BJ (cell line): ENCODE measurements at regions of chr6 and their contacts with region 1.

Region 1: DNA sequence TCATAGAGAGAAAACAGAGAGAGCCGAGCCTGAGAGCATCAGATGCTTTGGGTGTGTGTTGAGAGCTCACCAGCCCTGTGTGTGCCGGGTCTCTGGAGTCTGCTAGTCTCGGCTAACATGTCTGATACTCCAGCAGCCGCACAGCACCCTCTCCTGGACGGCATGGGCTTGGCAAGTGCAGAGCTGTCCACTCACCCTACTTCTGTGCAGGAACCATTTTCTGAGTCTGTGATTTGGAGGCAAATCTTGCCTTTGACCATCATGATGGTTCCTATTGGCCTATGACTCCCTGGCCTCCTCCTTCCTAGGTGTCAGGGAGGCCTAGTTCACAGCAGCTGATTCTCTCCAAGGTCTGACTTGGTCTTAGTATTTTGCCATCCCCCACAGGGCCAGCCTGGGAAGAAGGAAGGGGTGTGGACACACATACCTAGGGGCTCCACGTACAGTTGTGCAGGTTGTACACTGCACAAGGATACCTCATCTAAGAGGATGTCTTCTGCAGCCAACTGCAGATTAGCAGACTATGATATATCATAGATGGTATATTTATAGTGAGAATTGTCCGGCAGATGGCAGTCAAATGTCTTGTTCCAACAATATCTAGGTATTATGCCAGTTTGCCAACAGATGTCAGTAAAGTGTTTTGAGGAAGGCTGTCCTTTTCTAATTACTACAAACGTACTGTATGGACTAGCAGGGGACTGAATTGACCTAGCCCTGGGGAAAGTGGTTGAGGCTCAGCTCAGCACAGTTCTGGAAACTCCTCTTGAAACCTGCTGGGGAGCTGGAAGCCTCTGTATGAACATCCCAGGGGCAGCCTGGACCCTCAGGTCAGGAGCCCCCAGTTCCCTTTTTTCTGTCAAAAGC is 13.0 kb downstream of the FGD2 start:
- DNase-seq: peak; percentile 41
- H3K4me3 ChIP-seq: no peak overlapping the region
- H3K27me3 ChIP-seq: no peaks in the 10 kb centered on the region
- CTCF ChIP-seq: peak; percentile 97

Region 2: DNA sequence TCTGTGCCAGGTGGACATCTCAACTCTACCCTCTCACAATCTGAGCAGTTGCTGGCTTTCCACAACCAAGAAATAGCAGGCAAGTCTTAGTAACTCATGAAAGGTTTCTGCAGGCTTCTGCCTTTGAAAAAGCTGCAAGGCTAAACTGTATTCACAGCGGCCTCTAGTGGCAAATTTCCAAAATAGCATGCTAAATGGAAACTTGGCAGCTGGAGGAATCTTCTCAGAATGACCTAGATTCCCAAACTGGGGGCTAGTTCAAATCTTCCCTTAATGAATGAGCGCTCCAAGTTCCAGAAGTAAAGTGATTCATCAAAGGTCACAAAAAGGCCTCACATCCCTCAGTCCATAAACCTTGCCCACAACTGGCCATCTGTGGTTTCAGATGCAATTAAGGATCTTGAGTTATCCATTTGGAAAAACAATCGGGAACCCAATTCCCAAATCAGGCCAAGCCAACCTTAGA is 167.2 kb before region 1 on chr6:
- CTCF ChIA-PET with region 1: interaction called, 27 read pairs
- POLR2A ChIA-PET with region 1: no interaction called
- DNase-seq: peak; percentile 58
- H3K4me3 ChIP-seq: no peak overlapping the region
- H3K27me3 ChIP-seq: no peaks in the 10 kb centered on the region
- CTCF ChIP-seq: peak; percentile 73

Region 3: GRCh38 chr6:36885461-36886401 is 132.7 kb before region 1 on chr6 and contains the start of gene C6orf89:
- CTCF ChIA-PET with region 1: interaction called, 85 read pairs
- POLR2A ChIA-PET with region 1: no interaction called
- DNase-seq: peak; percentile 75
- H3K4me3 ChIP-seq: peak within 1 kb of the TSS; percentile 68
- H3K27me3 ChIP-seq: no peaks in the 10 kb centered on the region
- CTCF ChIP-seq: peak; percentile 86
- polyA plus RNA-seq, gene C6orf89: 66.0 and 71.4 TPM in 2 replicates

Region 4: GRCh38 chr6:36979347-36979742 is 39.1 kb before region 1 on chr6:
- CTCF ChIA-PET with region 1: interaction called, 21 read pairs
- POLR2A ChIA-PET with region 1: no interaction called
- DNase-seq: no peak
- H3K4me3 ChIP-seq: no peak overlapping the region
- H3K27me3 ChIP-seq: no peaks in the 10 kb centered on the region
- CTCF ChIP-seq: peak; percentile 90

Region 5: GRCh38 chr6:37029249-37029971 is 11.0 kb after region 1 on chr6:
- CTCF ChIA-PET with region 1: interaction called, 81 read pairs
- POLR2A ChIA-PET with region 1: no interaction called
- DNase-seq: peak; percentile 41
- H3K4me3 ChIP-seq: no peak overlapping the region
- H3K27me3 ChIP-seq: no peaks in the 10 kb centered on the region; the same call in none of the 2 replicates
- CTCF ChIP-seq: peak; percentile 81

Region 6: GRCh38 chr6:37200085-37200484 is 181.7 kb after region 1 on chr6:
- CTCF ChIA-PET with region 1: interaction called, 588 read pairs
- POLR2A ChIA-PET with region 1: no interaction called
- DNase-seq: no peak
- H3K4me3 ChIP-seq: no peak overlapping the region
- H3K27me3 ChIP-seq: peaks cover 10% of the 10 kb centered on the region
- CTCF ChIP-seq: no peak